Activated B cell treated with CpG ODN at 0.5 μM for 24 hours (primary cell): ENCODE measurements at regions of chr6 and their contacts with region 1.

Region 1: GRCh38 chr6:119742188-119742803 is 392.7 kb upstream of the MAN1A1 start:
- DNase-seq: peak; percentile 44
- ATAC-seq: peak; percentile 76
- H3K4me3 Mint-ChIP-seq: no peak overlapping the region
- H3K27ac Mint-ChIP-seq: no peak overlapping the region
- H3K4me1 Mint-ChIP-seq: no peaks in the 10 kb centered on the region
- H3K27me3 Mint-ChIP-seq: no peaks in the 10 kb centered on the region
- CTCF ChIP-seq: peak; percentile 61

Region 2: DNA sequence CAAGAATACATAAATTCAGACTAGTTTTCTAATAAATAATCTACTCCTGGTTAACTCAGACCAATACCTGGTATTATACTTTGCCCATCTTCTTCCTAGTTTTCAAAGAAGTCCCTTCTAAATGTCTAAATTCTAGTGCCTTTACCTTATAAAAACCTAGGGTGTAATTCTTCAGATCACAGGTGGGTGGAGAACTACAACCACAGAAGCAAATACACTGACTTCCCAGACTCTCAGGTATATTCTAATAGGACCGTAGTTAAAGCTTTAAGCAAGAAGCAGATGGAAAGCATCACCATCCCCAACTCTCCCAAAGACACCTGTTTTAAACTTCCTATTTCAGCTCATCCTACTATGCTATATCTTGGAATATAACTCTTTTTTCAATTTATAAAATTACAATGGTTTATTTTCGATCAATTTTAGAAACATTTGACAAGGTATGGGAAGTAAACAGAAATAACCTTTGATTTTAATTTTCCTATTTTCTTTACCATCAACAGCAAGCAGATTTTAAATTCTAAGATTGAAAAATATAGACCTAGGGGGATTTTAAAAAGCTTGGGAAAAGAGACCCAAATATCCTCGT is 408.5 kb before region 1 on chr6:
- CTCF ChIA-PET with region 1: interaction called, 3 read pairs
- POLR2A ChIA-PET with region 1: no interaction called
- intact Hi-C with region 1: loop called (anchors 1 kb)
- DNase-seq: no peak
- ATAC-seq: peak; percentile 71
- H3K4me3 Mint-ChIP-seq: no peak overlapping the region
- H3K27ac Mint-ChIP-seq: no peak overlapping the region
- H3K4me1 Mint-ChIP-seq: peaks cover 40% of the 10 kb centered on the region
- H3K27me3 Mint-ChIP-seq: no peaks in the 10 kb centered on the region
- CTCF ChIP-seq: no peak

Region 3: DNA sequence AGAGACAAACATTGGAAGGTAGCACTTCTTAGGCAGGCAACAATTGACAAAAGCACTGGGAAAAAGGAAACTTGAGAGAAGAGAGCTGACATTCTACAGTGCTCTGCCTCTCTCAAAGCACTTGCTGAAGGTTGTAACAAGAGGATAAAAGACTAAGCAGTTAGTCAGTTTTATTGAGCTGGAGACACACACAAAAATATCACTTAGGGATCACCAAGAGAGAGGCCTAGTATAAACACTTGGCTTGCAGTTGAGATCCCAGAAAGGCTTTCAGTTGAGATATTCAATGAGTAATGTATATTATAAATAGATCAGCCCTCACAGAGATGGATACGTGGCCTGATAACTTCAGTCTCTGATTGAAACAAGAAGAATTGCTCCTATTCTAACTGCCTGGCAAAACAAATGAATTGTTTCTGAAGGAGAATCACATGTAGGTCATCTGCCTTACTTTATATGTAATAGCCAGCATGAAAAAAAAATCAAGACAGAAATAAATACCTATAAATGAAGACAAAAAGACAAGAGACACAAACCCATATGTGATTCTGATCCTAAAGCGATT is 354.5 kb after region 1 on chr6:
- CTCF ChIA-PET with region 1: no interaction called
- POLR2A ChIA-PET with region 1: no interaction called
- intact Hi-C with region 1: no loop called
- DNase-seq: no peak
- ATAC-seq: no peak
- H3K4me3 Mint-ChIP-seq: no peak overlapping the region
- H3K27ac Mint-ChIP-seq: no peak overlapping the region
- H3K4me1 Mint-ChIP-seq: no peaks in the 10 kb centered on the region
- H3K27me3 Mint-ChIP-seq: no peaks in the 10 kb centered on the region
- CTCF ChIP-seq: no peak

Region 4: GRCh38 chr6:120274547-120274946 is 532.3 kb after region 1 on chr6:
- CTCF ChIA-PET with region 1: no interaction called
- POLR2A ChIA-PET with region 1: no interaction called
- intact Hi-C with region 1: loop called (anchors 5 kb)
- DNase-seq: no peak
- ATAC-seq: peak; percentile 34
- H3K4me3 Mint-ChIP-seq: no peak overlapping the region
- H3K27ac Mint-ChIP-seq: peak overlapping the region; percentile 75
- H3K4me1 Mint-ChIP-seq: peaks cover 19% of the 10 kb centered on the region
- H3K27me3 Mint-ChIP-seq: no peaks in the 10 kb centered on the region
- CTCF ChIP-seq: no peak

Region 5: GRCh38 chr6:120826253-120826652 is 1084.0 kb after region 1 on chr6:
- CTCF ChIA-PET with region 1: no interaction called
- POLR2A ChIA-PET with region 1: no interaction called
- intact Hi-C with region 1: loop called (anchors 2 kb)
- DNase-seq: no peak
- ATAC-seq: no peak
- H3K4me3 Mint-ChIP-seq: no peak overlapping the region
- H3K27ac Mint-ChIP-seq: no peak overlapping the region
- H3K4me1 Mint-ChIP-seq: no peaks in the 10 kb centered on the region
- H3K27me3 Mint-ChIP-seq: no peaks in the 10 kb centered on the region
- CTCF ChIP-seq: no peak

Region 6: GRCh38 chr6:121305957-121306607 is 1563.8 kb after region 1 on chr6:
- CTCF ChIA-PET with region 1: interaction called, 5 read pairs
- POLR2A ChIA-PET with region 1: no interaction called
- intact Hi-C with region 1: loop called (anchors 1 kb)
- DNase-seq: no peak
- ATAC-seq: no peak
- H3K4me3 Mint-ChIP-seq: no peak overlapping the region
- H3K27ac Mint-ChIP-seq: no peak overlapping the region
- H3K4me1 Mint-ChIP-seq: no peaks in the 10 kb centered on the region
- H3K27me3 Mint-ChIP-seq: no peaks in the 10 kb centered on the region
- CTCF ChIP-seq: no peak